Activated naive CD4-positive, alpha-beta T cell treated with anti-CD3 and anti-CD28 coated beads for 36 hours (primary cell): ENCODE measurements at regions of chr15 and their contacts with region 1.

Region 1: DNA sequence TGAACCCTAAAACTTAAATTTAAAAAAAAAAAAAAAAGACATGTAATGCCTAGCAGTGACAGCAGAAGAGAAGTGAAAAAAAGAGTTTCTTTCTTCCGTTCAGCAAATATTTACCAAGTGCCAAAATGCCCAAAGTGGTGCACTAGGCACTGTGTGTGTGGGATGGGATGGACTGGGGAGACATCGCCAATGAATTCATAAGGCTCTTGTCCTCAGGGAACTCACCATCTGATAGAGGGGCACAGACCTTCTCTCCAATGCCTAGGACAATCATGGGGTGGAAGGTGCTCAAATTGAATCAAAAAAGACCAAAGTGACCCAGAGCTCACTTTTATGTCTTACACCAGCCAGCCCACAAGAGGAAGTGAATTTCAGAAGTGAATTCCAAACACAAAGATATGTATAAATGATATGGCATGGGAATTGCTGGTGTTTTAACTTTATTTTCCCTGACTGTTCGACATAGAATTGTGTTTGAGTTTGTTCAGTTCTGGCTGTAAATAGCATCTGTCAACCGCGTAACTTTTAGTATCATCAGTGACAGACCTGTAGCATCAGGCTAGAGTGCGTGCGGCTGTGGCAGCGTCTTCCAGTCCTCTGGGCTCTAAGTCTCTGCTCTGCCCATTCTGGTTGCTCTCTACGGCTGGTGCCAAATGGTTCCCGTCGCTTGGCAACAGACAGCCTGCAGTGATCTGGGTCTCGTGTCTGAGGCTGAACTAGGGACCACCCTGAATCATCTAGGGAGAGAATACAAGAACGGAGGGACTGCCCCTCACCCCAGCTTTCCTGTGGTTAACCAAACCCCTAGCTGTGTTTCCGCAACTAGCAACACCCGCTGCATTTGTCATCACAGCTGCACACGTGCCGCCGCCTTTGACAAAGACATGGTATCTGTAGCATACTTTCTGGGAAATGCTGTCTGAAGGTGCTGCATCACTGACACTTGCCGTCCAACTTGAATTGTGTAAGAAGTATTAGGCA is 154.0 kb upstream of the THBS1 start:
- DNase-seq: peak; percentile 95
- H3K4me3 Mint-ChIP-seq: peak overlapping the region; percentile 17
- H3K27ac Mint-ChIP-seq: no peak overlapping the region
- H3K4me1 Mint-ChIP-seq: peaks cover 38% of the 10 kb centered on the region
- H3K27me3 Mint-ChIP-seq: peaks cover 26% of the 10 kb centered on the region

Region 2: DNA sequence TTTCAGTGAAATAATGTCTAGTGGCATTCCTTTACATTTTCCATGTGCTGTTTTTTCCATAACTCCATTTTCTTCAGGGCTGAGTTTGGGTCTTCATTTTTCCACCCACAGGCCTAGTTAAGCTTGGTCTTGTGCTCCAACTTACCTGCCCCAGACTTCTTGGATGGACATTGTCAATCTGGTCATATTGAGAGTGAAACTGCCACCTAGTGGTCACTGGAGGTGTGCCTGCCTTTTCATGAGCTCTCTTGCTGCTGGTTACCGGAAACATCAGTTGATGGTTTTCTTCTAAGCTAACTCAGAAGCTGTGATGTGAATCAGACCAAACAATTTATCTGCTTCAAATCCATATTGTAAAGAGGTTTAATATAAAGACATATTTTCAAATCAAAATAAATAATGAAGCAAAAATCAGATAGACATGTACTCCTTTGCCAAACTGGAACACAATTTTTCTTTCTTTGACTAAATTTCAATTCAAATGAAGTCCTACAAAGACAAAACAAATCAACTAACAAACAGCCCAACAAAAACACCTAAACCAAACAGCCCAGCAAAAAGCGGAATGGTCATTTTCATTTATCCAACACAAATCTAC is 727.1 kb before region 1 on chr15:
- CTCF ChIA-PET with region 1: interaction called, 3 read pairs
- intact Hi-C with region 1: loop called (anchors 10 kb)
- DNase-seq: peak; percentile 83
- H3K4me3 Mint-ChIP-seq: no peak overlapping the region
- H3K27ac Mint-ChIP-seq: peak overlapping the region; percentile 41
- H3K4me1 Mint-ChIP-seq: peaks cover 47% of the 10 kb centered on the region
- H3K27me3 Mint-ChIP-seq: no peaks in the 10 kb centered on the region

Region 3: GRCh38 chr15:39125904-39126303 is 300.9 kb before region 1 on chr15:
- CTCF ChIA-PET with region 1: no interaction called
- intact Hi-C with region 1: loop called (anchors 5 kb)
- DNase-seq: peak; percentile 47
- H3K4me3 Mint-ChIP-seq: no peak overlapping the region
- H3K27ac Mint-ChIP-seq: no peak overlapping the region
- H3K4me1 Mint-ChIP-seq: no peaks in the 10 kb centered on the region
- H3K27me3 Mint-ChIP-seq: peaks cover 6% of the 10 kb centered on the region

Region 4: DNA sequence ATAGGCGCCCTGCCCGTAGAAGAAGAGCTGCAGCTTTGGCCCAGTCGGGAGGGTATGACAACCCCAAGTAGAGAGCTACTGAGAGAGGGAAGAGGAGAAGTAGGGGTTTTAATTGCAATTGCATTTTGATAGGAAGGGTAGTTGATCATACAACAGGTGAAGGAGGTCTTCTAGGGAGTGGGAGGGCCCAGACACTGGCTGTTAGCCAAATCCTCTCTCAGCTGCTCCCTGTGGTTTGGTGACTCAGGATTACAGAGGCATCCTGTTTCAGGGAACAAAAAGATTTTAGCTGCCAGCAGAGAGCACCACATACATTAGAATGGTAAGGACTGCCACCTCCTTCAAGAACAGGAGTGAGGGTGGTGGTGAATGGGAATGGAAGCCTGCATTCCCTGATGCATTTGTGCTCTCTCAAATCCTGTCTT is 254.9 kb before region 1 on chr15:
- CTCF ChIA-PET with region 1: no interaction called
- intact Hi-C with region 1: loop called (anchors 2 kb)
- DNase-seq: peak; percentile 68
- H3K4me3 Mint-ChIP-seq: no peak overlapping the region
- H3K27ac Mint-ChIP-seq: no peak overlapping the region
- H3K4me1 Mint-ChIP-seq: no peaks in the 10 kb centered on the region
- H3K27me3 Mint-ChIP-seq: peaks cover 13% of the 10 kb centered on the region

Region 5: GRCh38 chr15:39411102-39411989 is 15.5 kb before region 1 on chr15:
- CTCF ChIA-PET with region 1: no interaction called
- intact Hi-C with region 1: loop called (anchors 2 kb)
- DNase-seq: peak; percentile 41
- H3K4me3 Mint-ChIP-seq: no peak overlapping the region
- H3K27ac Mint-ChIP-seq: no peak overlapping the region
- H3K4me1 Mint-ChIP-seq: peaks cover 6% of the 10 kb centered on the region
- H3K27me3 Mint-ChIP-seq: peaks cover 9% of the 10 kb centered on the region

Region 6: DNA sequence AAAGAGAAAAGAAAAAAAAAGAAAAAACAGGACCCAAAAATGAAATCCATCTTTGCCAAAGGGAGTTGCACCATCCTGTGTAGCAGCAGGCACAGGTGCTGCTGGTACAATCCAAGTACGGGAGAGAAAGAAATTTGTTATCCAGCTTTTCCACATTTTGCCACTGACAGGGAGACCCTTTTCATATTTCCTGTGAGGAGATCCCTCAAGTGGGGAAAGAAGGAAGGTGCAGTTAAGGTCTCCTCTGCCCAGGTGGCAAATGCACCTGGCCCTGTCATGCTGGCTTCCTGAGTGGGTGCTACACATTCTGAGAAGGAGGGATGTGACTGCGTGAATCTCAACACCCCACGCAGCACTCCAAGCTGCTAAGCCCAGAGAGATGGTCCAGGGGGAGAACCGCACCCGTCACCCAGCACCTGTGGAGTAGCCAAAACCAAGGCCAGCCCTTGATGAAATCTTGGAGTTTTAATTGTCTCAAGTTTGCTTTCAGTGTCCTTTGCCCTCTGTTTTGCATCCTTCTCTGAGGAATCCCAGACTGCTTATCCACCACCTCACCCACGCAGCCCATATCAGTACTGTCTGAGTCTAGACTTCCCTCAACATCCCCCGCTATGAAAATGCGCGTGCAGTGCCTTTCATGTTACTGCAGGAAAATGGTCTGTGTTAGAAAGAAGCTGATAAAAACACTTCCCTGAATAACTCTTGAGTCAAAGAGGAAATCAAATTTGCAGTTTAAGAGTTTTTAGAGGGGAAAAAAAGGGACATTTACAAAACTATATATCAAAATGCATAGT is 12.2 kb after region 1 on chr15:
- CTCF ChIA-PET with region 1: no interaction called
- intact Hi-C with region 1: no loop called
- DNase-seq: no peak
- H3K4me3 Mint-ChIP-seq: no peak overlapping the region
- H3K27ac Mint-ChIP-seq: no peak overlapping the region
- H3K4me1 Mint-ChIP-seq: no peaks in the 10 kb centered on the region
- H3K27me3 Mint-ChIP-seq: peaks cover 20% of the 10 kb centered on the region

Region 7: DNA sequence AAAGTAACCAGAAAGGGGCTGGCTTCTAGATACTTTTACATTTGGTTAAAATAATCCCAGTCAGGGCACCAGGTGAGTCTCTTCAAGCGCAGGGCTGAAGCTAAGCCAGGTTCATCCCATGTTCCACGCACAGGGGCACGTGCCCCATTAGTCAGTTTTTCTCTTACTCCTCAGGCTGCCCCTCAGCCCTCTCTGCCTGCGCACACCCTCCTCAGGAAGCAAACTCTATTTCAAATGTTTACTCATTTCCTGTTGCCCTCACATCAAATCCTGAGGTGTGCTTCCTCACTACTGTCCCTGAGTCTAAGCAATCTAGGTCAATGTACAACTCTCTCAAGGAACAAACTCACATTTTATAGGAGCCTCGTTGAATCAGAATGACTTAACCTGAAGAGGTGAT is 202.5 kb after region 1 on chr15:
- CTCF ChIA-PET with region 1: no interaction called
- intact Hi-C with region 1: loop called (anchors 2 kb)
- DNase-seq: peak; percentile 82
- H3K4me3 Mint-ChIP-seq: no peak overlapping the region
- H3K27ac Mint-ChIP-seq: peak overlapping the region; percentile 14
- H3K4me1 Mint-ChIP-seq: peaks cover 49% of the 10 kb centered on the region
- H3K27me3 Mint-ChIP-seq: no peaks in the 10 kb centered on the region